Colonic mucosa (tissue), 4 donors: ENCODE measurements at regions of chr12 and their contacts with region 1.

Region 1: GRCh38 chr12:105158876-105159275 is 51.3 kb downstream of the WASHC4 start:
- DNase-seq: no peak
- H3K4me3 ChIP-seq: no peak overlapping the region
- H3K27ac ChIP-seq: no peak overlapping the region
- H3K4me1 ChIP-seq: no peaks in the 10 kb centered on the region
- H3K27me3 ChIP-seq: no peaks in the 10 kb centered on the region
- CTCF ChIP-seq: no peak

Region 2: DNA sequence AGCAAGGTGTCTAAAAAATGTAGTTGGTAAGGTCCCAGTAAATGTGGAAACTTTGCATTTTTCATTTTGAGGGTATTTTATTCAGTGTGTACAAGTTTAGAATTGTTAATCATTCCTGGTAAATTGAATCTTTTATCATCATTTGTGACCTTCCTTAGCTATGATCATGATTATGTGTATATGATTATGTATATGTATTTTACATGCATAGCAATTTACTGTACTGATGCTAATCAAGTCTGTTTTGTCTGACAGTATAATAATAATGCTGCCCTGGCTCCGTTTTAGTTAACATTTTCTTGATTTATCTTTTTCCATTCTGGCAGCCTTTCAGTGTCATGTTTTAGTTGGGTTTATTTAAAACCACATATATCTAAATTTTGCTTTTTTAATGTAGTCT is 41.9 kb before region 1 on chr12:
- intact Hi-C with region 1: loop called (anchors 5 kb)
- DNase-seq: no peak
- H3K4me3 ChIP-seq: no peak overlapping the region
- H3K27ac ChIP-seq: no peak overlapping the region
- H3K4me1 ChIP-seq: peaks cover 6% of the 10 kb centered on the region
- H3K27me3 ChIP-seq: no peaks in the 10 kb centered on the region
- CTCF ChIP-seq: no peak